ENCODE measurements at regions of chr1 and their contacts with region 1.

Region 1: GRCh38 chr1:207404849-207405525 is 49.1 kb upstream of the CR2 start:
- DNase-seq: no peak
- ATAC-seq: peak; percentile 73

Region 2: GRCh38 chr1:207181838-207182237 is 223.1 kb before region 1 on chr1:
- intact Hi-C with region 1: loop called (anchors 5 kb)
- DNase-seq: no peak
- ATAC-seq: no peak

Measured in Right ventricle myocardium superior (tissue), 1 donor.